ENCODE measurements at regions of chr4 and their contacts with region 1.

Region 1: GRCh38 chr4:119212234-119212963 is at the start of gene USP53:
- DNase-seq: peak; percentile 95
- ATAC-seq: peak; percentile 92
- H3K4me3 Mint-ChIP-seq: peak within 1 kb of the TSS; percentile 90
- H3K27ac Mint-ChIP-seq: peak within 1 kb of the TSS; percentile 94
- H3K4me1 Mint-ChIP-seq: peaks cover 56% of the 10 kb centered on the region
- H3K27me3 Mint-ChIP-seq: no peaks in the 10 kb centered on the region
- CTCF ChIP-seq: no peak
- total RNA-seq, gene USP53: 20.4 TPM in 2 replicates

Region 2: DNA sequence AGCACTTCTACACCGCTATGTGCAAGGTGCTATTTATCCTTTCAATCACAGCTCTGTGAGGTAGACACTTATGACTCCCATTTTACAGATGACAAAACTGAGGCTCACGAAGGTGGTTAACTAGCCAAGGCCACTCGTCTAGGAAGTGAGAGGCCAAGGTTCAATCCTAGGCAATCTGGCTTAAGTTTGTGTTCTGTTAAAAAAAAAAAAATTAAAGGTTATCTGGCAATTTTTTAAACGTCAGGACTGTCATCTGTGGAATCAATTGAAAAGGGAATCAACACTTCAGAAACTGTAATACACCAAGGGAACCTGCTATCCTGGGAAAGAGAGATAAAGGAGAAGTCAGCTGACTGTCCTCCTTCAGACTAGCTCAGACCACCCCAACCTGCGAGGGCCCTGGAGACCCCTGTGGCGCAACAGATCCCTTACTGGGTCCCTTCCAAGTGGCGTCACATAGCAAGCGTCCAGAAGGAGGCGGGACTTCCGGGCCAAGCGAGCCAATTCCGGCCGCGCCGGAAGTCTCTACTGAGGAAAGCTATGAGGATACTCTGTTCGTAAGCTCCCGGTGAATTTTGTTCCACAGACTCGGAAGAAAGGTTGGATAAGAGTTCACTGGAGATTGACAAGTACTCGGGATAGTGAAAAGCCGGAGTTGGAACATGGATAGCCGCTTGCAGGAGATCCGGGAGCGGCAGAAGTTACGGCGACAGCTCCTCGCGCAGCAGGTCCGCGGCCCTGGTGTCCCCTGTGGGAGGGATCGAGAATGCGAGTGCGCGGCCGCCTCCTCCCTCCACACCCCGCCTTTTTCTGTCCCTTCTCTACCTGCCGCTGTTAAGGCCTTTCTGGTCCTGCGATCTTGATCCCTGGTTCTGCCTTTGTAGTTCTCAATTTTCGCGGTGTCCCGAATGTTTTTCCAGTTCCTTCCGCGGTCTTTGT is 527.3 kb before region 1 on chr4 and contains the start of gene METTL14:
- CTCF ChIA-PET with region 1: no interaction called
- POLR2A ChIA-PET with region 1: interaction called, 4 read pairs
- intact Hi-C with region 1: loop called (anchors 1 kb)
- DNase-seq: peak; percentile 84
- ATAC-seq: peak; percentile 95
- H3K4me3 Mint-ChIP-seq: peak within 1 kb of the TSS; percentile 98
- H3K27ac Mint-ChIP-seq: peak within 1 kb of the TSS; percentile 95
- H3K4me1 Mint-ChIP-seq: peaks cover 23% of the 10 kb centered on the region
- H3K27me3 Mint-ChIP-seq: no peaks in the 10 kb centered on the region
- CTCF ChIP-seq: no peak
- total RNA-seq, gene METTL14: 56.5 and 62.7 TPM in 2 replicates

Region 3: DNA sequence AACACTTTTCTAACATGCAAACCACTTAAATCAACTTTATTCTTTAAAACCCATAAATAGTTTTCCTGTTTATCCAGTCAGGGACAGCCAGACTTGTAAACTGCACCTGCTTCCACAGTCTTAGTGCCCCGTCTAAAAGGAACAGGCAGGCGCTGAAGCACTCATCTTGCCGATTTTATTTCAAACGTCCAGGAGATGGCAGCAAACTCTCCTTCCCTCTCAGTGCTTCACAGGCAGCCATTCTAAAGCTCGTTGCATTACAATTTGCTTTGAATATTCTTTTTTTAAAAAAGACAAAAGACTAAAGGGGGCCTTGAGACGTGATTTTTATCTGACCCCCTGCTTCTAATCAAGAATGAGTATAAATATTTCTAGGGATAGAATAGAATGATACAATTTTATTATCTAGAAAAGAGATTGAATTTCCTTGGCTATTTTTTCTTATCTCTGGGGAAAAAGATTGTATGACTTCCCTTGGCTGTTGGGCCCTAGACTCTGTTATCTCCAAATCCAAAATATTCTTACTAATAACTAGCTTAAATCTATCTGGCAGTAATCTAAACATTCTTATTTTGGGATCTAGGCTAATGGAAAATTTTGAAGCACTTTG is 170.3 kb before region 1 on chr4:
- CTCF ChIA-PET with region 1: interaction called, 4 read pairs
- POLR2A ChIA-PET with region 1: interaction called, 3 read pairs
- intact Hi-C with region 1: loop called (anchors 1 kb)
- DNase-seq: no peak
- ATAC-seq: peak; percentile 83
- H3K4me3 Mint-ChIP-seq: no peak overlapping the region
- H3K27ac Mint-ChIP-seq: no peak overlapping the region
- H3K4me1 Mint-ChIP-seq: peaks cover 5% of the 10 kb centered on the region
- H3K27me3 Mint-ChIP-seq: no peaks in the 10 kb centered on the region
- CTCF ChIP-seq: no peak

Region 4: GRCh38 chr4:119179011-119179410 is 33.4 kb before region 1 on chr4:
- CTCF ChIA-PET with region 1: no interaction called
- POLR2A ChIA-PET with region 1: no interaction called
- intact Hi-C with region 1: no loop called
- DNase-seq: no peak
- ATAC-seq: no peak
- H3K4me3 Mint-ChIP-seq: no peak overlapping the region
- H3K27ac Mint-ChIP-seq: no peak overlapping the region
- H3K4me1 Mint-ChIP-seq: no peaks in the 10 kb centered on the region
- H3K27me3 Mint-ChIP-seq: peaks cover 4% of the 10 kb centered on the region
- CTCF ChIP-seq: no peak

Region 5: DNA sequence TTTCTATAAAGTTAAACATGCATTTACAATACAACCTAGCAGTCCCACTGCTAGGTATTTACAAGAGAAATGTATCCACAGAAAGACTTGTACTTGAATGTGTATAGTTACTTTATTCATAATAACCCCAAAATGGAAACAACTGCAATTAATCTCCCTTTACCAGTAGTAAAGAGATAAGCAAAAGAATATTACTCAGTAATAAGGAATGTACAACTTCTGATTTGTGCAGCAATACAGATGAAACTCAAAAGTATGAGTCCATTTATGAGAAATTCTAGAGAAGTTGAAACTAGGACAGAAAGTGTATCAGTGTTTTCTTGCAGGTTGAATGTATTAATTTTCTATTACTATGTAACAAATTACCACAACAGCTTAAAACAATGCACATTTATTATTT is 15.3 kb after region 1 on chr4:
- CTCF ChIA-PET with region 1: no interaction called
- POLR2A ChIA-PET with region 1: interaction called, 10 read pairs
- intact Hi-C with region 1: no loop called
- DNase-seq: no peak
- ATAC-seq: no peak
- H3K4me3 Mint-ChIP-seq: no peak overlapping the region
- H3K27ac Mint-ChIP-seq: no peak overlapping the region
- H3K4me1 Mint-ChIP-seq: peaks cover 5% of the 10 kb centered on the region
- H3K27me3 Mint-ChIP-seq: no peaks in the 10 kb centered on the region
- CTCF ChIP-seq: no peak

Region 6: DNA sequence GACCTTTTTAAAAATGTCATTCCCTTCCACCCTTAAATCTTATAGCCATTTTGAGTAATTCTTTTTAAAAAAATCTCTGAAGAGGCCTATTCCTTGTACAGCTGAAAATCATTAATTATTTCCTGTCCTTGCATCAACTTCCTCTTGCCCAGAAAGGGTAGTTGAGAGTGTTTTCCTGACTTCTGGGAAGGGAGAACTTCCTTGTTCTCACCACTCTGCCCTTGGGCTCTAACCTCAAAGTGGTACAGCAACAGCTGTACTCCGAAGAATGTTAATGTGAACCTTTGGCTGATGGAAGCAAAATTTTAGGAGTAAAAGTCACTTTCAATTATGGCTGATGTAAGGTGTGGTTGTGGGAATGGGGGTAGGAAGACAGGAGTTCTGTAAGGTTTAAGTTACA is 124.6 kb after region 1 on chr4:
- CTCF ChIA-PET with region 1: no interaction called
- POLR2A ChIA-PET with region 1: no interaction called
- intact Hi-C with region 1: no loop called
- DNase-seq: no peak
- ATAC-seq: no peak
- H3K4me3 Mint-ChIP-seq: no peak overlapping the region
- H3K27ac Mint-ChIP-seq: no peak overlapping the region
- H3K4me1 Mint-ChIP-seq: no peaks in the 10 kb centered on the region
- H3K27me3 Mint-ChIP-seq: no peaks in the 10 kb centered on the region
- CTCF ChIP-seq: no peak

Region 7: GRCh38 chr4:119506806-119507205 is 294.4 kb after region 1 on chr4:
- CTCF ChIA-PET with region 1: no interaction called
- POLR2A ChIA-PET with region 1: no interaction called
- intact Hi-C with region 1: no loop called
- DNase-seq: no peak
- ATAC-seq: no peak
- H3K4me3 Mint-ChIP-seq: no peak overlapping the region
- H3K27ac Mint-ChIP-seq: no peak overlapping the region
- H3K4me1 Mint-ChIP-seq: no peaks in the 10 kb centered on the region
- H3K27me3 Mint-ChIP-seq: no peaks in the 10 kb centered on the region
- CTCF ChIP-seq: no peak

Region 8: DNA sequence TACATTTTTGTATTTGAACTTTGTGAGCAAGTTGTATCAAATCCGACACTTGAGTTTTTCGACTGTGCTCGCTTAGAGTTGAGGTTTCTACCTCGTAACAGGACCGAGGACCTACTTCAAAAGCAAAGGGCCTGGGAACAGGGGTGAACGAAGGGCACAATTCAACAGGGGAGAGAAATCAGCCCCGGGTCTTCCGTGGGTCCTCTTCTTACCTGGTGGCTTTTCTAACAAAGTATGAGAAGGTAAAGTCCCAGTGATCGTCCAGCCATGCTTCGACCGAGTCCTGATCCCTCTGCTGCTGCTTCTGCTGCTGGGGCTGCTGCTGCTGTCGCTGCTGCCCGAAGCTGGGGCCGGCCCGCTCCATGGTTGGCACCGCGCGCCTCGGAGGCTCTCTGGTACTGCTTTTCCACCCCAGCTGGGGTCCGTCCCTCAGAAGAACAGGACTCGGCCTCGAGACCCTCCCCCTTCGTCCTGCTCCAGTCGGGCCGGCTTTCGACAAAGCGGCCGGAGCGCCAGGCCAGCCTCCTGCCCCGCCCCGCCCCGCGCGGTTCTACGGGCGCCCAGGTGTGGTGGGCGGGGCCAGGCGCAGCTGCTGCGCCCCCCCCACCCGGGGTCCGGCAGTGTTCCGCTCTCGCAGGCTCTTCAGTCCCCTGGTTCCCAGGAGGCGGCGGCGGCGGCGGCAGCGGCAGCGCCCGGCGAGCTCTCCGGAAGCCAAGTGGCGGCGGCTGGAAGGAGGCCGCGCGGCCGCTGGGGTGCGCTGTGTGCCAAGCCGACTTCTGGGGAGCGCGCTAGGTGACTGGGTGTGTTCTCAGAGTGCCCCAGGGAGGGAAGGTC is 416.1 kb after region 1 on chr4 and contains the start of gene PDE5A:
- CTCF ChIA-PET with region 1: no interaction called
- POLR2A ChIA-PET with region 1: no interaction called
- intact Hi-C with region 1: loop called (anchors 5 kb)
- DNase-seq: peak; percentile 69
- ATAC-seq: peak; percentile 84
- H3K4me3 Mint-ChIP-seq: peak within 1 kb of the TSS; percentile 85
- H3K27ac Mint-ChIP-seq: peak within 1 kb of the TSS; percentile 51
- H3K4me1 Mint-ChIP-seq: peaks cover 25% of the 10 kb centered on the region
- H3K27me3 Mint-ChIP-seq: peaks cover 12% of the 10 kb centered on the region
- CTCF ChIP-seq: peak; percentile 26
- total RNA-seq, gene PDE5A: 0.47 and 0.66 TPM in 2 replicates